ENCODE measurements at regions of chr11 and their contacts with region 1.

Region 1: DNA sequence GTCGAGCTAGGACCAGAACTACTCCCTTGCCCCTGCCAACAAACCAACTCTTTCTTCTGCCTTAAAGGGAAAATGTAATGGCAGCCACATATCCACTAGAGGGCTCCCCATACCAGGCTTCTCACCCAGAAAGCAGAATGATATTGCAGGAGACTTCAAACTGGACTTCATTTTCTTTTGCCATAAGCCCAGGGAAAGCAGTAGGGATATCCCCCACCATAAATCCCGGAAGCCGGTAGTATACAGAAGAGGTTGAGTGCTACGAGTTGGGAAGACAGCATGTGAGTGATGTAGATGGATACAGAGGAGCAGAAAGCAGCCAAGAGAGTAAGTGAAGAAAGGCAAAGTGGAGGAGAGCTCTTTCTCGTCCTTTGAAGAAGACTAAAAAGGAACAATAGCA is 12.1 kb downstream of the PLAAT5 start:
- DNase-seq: peak; percentile 65 to 79 (median 71)
- ATAC-seq: peak; percentile 87
- H3K4me3 ChIP-seq: no peak overlapping the region
- H3K27ac ChIP-seq: no peak overlapping the region
- H3K4me1 ChIP-seq: peaks cover 0 to 6% of the 10 kb centered on the region in 2 experiments; a peak in 2 of 5 replicates
- H3K27me3 ChIP-seq: no peaks in the 10 kb centered on the region
- CTCF ChIP-seq: peak; percentile 85 to 95 (median 86)
- EP300 ChIP-seq: no peak
- POLR2A ChIP-seq: no peak
- RAD21 ChIP-seq: peak; percentile 99

Region 2: DNA sequence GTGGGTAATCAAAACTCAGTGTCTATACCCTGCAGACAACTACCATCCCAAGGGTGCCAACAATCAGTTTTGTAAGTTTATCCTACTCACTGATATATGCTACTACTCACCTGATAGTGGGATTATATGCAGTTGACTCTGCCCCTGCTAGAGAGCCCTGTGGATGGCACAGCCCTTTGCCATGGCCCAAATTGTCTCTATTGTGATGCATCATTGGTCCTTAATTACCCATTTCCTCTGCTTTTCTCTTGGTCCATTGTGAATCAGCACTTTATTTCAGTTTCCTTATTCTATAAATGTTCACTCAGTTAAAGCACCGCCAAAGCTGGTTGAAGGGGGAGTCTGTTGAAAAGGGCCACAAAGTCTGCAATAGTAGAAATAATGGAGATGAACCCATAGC is 30.2 kb before region 1 on chr11:
- CTCF ChIA-PET with region 1: no interaction called
- POLR2A ChIA-PET with region 1: no interaction called
- in situ Hi-C with region 1: no loop called
- intact Hi-C with region 1: no loop called
- DNase-seq: no peak
- ATAC-seq: no peak
- H3K4me3 ChIP-seq: no peak overlapping the region
- H3K27ac ChIP-seq: no peak overlapping the region
- H3K4me1 ChIP-seq: no peaks in the 10 kb centered on the region
- H3K27me3 ChIP-seq: peaks cover 3 to 5% of the 10 kb centered on the region in 2 experiments; a peak in 3 of 5 replicates
- CTCF ChIP-seq: no peak
- EP300 ChIP-seq: no peak
- POLR2A ChIP-seq: no peak
- RAD21 ChIP-seq: no peak

Region 3: DNA sequence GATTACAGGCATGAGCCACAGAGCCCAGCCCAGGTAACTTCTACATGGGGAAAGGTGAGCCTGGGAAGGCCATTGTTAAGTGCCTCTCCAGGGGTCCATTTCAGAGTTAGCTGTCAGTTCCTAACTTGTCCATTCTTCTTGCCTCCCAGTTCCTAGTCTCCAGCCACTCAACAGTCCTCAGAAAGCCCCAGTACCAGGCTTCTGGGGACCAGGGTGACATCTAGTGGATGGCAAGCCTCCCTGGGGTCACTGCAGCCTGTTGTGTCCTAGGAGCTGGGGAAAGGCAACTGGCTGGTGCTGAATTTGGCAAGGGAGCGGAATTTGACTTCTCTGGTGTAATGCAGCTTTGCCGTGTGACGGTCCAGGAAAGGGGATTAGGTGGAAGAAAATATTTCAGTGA is 29.1 kb after region 1 on chr11:
- CTCF ChIA-PET with region 1: interaction called, 8 read pairs
- POLR2A ChIA-PET with region 1: no interaction called
- in situ Hi-C with region 1: no loop called
- intact Hi-C with region 1: loop called (anchors 1 kb)
- DNase-seq: peak; percentile 40 to 82 (median 60)
- ATAC-seq: peak; percentile 91
- H3K4me3 ChIP-seq: no peak overlapping the region
- H3K27ac ChIP-seq: no peak overlapping the region
- H3K4me1 ChIP-seq: peaks cover 32 to 46% of the 10 kb centered on the region in 2 experiments
- H3K27me3 ChIP-seq: no peaks in the 10 kb centered on the region
- CTCF ChIP-seq: peak; percentile 75 to 89 (median 85)
- EP300 ChIP-seq: no peak; the same call in 1 of the 2 replicates
- POLR2A ChIP-seq: no peak
- RAD21 ChIP-seq: peak; percentile 88 to 92

Region 4: DNA sequence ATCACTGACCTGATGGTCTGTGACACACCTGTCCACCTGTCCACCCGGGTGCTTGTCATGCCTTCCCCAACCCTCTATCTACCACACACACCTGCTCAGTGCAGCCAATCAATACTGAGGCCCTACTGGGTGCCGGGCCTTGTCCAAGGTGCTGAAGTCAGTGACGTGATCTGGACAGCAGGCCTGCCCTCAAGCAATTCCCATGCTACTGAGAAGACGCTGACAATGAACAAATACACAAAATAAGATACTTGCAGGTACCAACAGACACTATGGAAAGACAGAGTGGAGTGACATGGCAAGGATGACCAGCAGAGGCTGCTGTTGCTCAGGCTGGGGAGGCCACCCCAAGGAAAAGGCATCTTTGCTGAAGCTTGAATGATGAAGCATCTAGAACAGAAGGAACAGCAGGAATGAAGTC is 114.1 kb after region 1 on chr11:
- CTCF ChIA-PET with region 1: interaction called, 3 read pairs
- POLR2A ChIA-PET with region 1: no interaction called
- in situ Hi-C with region 1: no loop called
- intact Hi-C with region 1: loop called (anchors 5 kb)
- DNase-seq: peak in 3 of 4 experiments; percentile 34 to 38 (median 37)
- ATAC-seq: peak; percentile 85
- H3K4me3 ChIP-seq: no peak overlapping the region
- H3K27ac ChIP-seq: no peak overlapping the region
- H3K4me1 ChIP-seq: peaks cover 0 to 4% of the 10 kb centered on the region in 2 experiments; a peak in 1 of 5 replicates
- H3K27me3 ChIP-seq: peaks cover 11 to 33% of the 10 kb centered on the region in 2 experiments; a peak in 3 of 5 replicates
- CTCF ChIP-seq: peak; percentile 70 to 72 (median 71)
- EP300 ChIP-seq: no peak
- POLR2A ChIP-seq: no peak
- RAD21 ChIP-seq: peak; percentile 21 to 76; a peak in 3 of 4 replicates

Region 5: DNA sequence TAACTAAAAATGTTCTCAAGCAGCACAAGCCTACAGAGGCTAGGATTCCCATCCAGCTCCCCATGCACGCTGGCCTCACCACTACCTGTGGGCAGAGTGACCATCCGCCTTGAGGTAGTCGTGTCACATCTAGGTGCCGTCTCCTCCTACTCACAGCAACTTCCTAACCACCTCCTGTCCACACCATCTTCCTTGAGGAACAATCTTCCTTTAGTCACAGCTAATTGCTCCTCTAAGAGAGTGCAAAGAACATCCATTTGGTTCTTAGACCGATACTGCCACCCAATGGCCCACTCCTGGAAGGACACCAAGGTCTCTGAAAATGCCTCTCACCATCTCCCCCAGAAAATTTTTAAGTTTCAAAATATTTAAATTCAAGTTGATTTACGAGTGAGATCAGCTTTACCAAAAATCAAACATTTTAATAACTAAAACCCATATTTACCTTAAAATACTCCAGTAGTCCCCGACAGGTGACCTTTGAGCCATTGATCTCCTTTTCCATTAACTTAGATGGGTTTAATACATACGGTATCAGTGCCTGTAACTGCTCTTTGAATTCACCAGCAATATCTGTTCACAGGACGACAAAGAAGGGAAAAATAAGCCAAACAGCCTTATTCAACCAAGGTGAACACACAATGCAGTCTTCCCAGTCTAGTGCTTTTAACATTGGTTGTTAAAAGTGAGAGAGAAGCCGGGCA is 157.0 kb after region 1 on chr11:
- CTCF ChIA-PET with region 1: interaction called, 53 read pairs
- POLR2A ChIA-PET with region 1: no interaction called
- in situ Hi-C with region 1: loop called (anchors 5 kb)
- intact Hi-C with region 1: loop called (anchors 1 kb)
- DNase-seq: peak; percentile 63 to 73 (median 70)
- ATAC-seq: peak; percentile 91
- H3K4me3 ChIP-seq: no peak overlapping the region
- H3K27ac ChIP-seq: no peak overlapping the region
- H3K4me1 ChIP-seq: no peaks in the 10 kb centered on the region
- H3K27me3 ChIP-seq: no peaks in the 10 kb centered on the region
- CTCF ChIP-seq: peak; percentile 69 to 89 (median 81)
- EP300 ChIP-seq: no peak
- POLR2A ChIP-seq: no peak
- RAD21 ChIP-seq: peak; percentile 89 to 94

Region 6: DNA sequence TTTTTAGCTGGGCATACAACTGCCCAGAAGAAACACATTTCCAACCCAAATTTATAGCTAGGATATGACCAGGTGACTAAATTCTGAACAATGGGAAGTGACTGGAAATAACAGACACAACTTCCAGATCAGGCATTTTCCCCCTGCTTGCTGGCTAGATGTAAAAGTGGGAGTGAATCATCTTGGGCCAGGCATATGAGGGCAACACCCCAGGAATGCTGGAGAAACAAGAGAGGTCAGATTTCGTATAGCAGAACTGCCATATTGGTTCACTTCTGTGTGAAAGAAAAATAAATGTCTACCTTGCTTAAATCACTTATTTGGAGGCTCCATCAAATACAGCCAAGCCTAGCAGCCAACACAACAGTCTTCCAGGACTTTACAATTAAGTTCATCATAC is 184.9 kb after region 1 on chr11:
- CTCF ChIA-PET with region 1: no interaction called
- POLR2A ChIA-PET with region 1: no interaction called
- in situ Hi-C with region 1: no loop called
- intact Hi-C with region 1: no loop called
- DNase-seq: no peak
- ATAC-seq: no peak
- H3K4me3 ChIP-seq: no peak overlapping the region
- H3K27ac ChIP-seq: no peak overlapping the region
- H3K4me1 ChIP-seq: peaks cover 6 to 10% of the 10 kb centered on the region in 2 experiments; a peak in 4 of 5 replicates
- H3K27me3 ChIP-seq: no peaks in the 10 kb centered on the region
- CTCF ChIP-seq: no peak
- EP300 ChIP-seq: no peak
- POLR2A ChIP-seq: no peak
- RAD21 ChIP-seq: no peak

Region 7: DNA sequence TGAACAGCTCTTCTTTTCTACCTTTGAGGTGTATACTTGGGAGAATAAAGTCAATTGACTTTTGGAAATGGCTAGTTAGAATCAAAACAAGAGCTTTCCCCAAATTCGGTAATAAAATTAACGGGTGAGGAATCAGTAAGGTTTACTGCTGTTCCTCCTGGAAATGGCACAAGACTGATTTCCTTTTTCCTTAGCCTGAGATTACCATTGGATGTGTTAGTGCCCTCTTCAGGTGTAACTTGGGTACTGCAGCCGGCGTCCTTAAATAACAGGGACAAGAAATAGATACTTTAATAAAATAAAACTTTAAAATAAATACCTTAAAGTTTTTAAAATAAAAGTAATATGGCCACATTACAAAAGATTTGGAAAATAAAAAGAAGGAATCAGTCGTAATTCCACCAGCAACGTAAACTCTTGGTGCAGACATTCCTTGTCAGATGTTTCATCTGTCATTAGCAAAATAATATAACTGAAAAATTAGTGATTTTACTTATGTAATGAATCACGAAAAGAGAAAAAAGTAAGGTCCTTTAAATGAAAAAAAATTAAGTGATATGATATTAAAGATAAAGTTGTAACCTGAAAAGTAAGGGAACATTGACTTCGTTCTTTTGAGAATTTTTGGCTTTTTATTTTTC is 259.9 kb after region 1 on chr11:
- CTCF ChIA-PET with region 1: interaction called, 6 read pairs
- POLR2A ChIA-PET with region 1: no interaction called
- in situ Hi-C with region 1: loop called (anchors 10 kb)
- intact Hi-C with region 1: loop called (anchors 2 kb)
- DNase-seq: peak; percentile 49 to 79 (median 58)
- ATAC-seq: peak; percentile 68
- H3K4me3 ChIP-seq: no peak overlapping the region
- H3K27ac ChIP-seq: no peak overlapping the region
- H3K4me1 ChIP-seq: peaks cover 7 to 8% of the 10 kb centered on the region in 2 experiments; a peak in 3 of 5 replicates
- H3K27me3 ChIP-seq: no peaks in the 10 kb centered on the region
- CTCF ChIP-seq: peak; percentile 70 to 88 (median 75)
- EP300 ChIP-seq: no peak
- POLR2A ChIP-seq: no peak
- RAD21 ChIP-seq: peak; percentile 62 to 65